ENCODE measurements at regions of chr2 and their contacts with region 1.

Region 1: DNA sequence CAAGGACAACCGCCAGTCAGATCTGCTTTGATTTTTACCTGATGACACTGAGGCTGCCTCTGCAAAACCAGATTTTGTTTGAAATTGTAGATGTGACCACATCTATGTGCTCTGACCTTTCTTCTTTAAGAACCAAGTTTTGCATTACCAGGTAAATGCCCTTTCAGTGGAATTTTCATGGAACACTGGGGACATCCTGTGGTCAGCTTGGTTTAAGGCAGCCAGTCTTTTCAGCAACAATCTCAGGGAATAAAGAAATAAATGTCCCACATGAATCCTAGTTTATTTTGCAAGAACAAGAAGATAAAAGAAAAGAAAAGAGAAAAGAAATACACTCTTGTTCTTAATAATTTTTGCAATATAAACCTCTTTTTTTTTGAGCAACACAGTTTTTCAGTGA is 90.6 kb downstream of the POU3F3 start:
- DNase-seq: peak; percentile 21
- ATAC-seq: peak; percentile 66
- H3K4me3 ChIP-seq: no peak overlapping the region
- H3K27ac ChIP-seq: no peak overlapping the region
- H3K4me1 ChIP-seq: peaks cover 6% of the 10 kb centered on the region; the same call in 1 of the 2 replicates
- H3K27me3 ChIP-seq: peaks cover 0 to 14% of the 10 kb centered on the region in 2 experiments; a peak in 2 of 5 replicates
- CTCF ChIP-seq: peak; percentile 69
- EP300 ChIP-seq: no peak
- POLR2A ChIP-seq: no peak
- RAD21 ChIP-seq: peak; percentile 59

Region 2: GRCh38 chr2:104033399-104033798 is 911.1 kb before region 1 on chr2:
- CTCF ChIA-PET with region 1: no interaction called
- POLR2A ChIA-PET with region 1: no interaction called
- in situ Hi-C with region 1: no loop called
- intact Hi-C with region 1: loop called (anchors 10 kb)
- DNase-seq: no peak
- ATAC-seq: no peak; the same call in 2 of the 3 replicates
- H3K4me3 ChIP-seq: no peak overlapping the region
- H3K27ac ChIP-seq: no peak overlapping the region
- H3K4me1 ChIP-seq: no peaks in the 10 kb centered on the region
- H3K27me3 ChIP-seq: no peaks in the 10 kb centered on the region
- CTCF ChIP-seq: 0 out of 2 replicates have a peak, but pooled peaks have one; percentile 46
- EP300 ChIP-seq: no peak
- POLR2A ChIP-seq: no peak
- RAD21 ChIP-seq: no peak